Posterior vena cava (tissue), 2 donors: ENCODE measurements at regions of chr15 and their contacts with region 1.

Region 1: GRCh38 chr15:85750319-85750806 is 44.4 kb downstream of the KLHL25 start:
- DNase-seq: peak; percentile 95

Region 2: DNA sequence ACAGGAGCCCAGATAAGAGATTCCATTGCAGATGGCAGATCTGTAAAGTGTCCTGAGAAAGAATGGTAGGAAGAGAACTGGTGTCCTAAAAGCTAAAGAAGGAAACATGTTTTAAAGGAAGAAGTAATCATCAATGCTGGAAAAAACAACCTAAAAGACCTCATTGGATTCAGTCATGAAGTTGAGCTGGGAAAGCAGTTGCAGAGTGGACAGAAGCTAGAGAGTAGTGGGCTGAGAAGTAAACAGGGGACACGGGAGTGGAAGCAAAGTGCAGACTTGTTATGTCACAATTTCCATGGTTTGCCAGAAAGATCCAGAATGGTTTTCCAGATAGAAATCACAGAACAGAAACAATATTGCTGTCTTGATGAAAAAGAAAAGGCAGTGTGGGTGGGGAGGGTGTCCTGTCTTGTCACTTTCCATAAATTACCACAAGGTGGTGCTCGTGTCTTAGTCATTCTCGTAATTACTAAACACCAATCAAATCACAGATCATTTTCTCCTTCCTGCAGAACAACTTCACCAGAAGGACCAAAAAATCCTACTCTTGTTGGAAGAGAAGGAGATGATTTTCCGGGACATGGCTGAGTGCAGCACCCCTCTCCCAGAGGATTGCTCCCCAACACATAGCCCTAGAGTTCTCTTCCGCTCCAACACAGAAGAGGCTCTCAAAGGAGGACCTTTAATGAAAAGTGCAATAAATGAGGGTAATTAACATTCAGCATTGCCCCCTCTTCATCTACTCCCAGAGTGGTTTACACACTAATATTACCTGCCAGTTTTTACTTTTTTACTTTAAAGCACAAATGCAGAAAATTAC is 20.2 kb before region 1 on chr15:
- intact Hi-C with region 1: no loop called
- DNase-seq: no peak

Region 3: DNA sequence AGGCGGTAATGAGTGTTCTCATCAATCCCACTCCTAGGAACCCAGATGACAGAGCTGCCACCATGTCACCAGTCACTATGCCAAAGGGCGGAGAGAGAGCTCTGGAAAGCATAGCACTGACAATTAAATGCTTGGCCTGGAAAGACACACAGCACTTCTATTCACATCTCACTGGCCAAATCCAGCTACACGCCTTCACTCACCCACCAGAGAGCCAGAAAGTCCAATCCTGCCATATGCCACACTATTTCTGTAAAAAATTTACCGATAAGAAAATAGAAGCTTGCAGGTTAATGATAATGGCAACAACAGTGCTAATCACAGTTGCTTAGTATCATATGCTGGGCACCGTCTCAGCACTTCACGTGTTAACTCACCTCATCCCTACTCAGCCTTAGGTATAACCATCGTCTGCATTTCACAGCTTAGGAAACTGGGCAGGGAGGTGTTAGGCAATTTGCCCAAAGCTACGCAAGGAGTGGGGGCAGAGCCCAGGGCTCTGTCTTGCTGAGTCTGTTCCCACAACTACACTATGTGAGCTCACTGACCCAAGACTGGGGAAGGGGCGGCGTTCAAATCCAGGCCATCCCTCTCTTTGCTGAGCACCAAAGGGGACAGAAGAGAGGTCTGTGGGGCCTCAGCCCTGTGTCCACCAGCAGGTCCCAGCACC is 27.9 kb after region 1 on chr15:
- intact Hi-C with region 1: loop called in 1 of 2 experiments (anchors 1 kb)
- DNase-seq: peak; percentile 78

Region 4: GRCh38 chr15:85794603-85795336 is 44.4 kb after region 1 on chr15 and contains the start of gene KLHL25:
- intact Hi-C with region 1: loop called in 1 of 2 experiments (anchors 5 kb)
- DNase-seq: peak; percentile 98
- total RNA-seq, gene KLHL25: 10.0 to 10.3 TPM